ENCODE measurements at regions of chr19 and their contacts with region 1.

Region 1: GRCh38 chr19:48965040-48965805 is at the start of gene FTL:
- DNase-seq: peak; percentile 80
- H3K4me3 ChIP-seq: peak within 1 kb of the TSS; percentile 51 to 62 (median 52)
- H3K27ac ChIP-seq: peak within 1 kb of the TSS; percentile 7
- H3K4me1 ChIP-seq: peaks cover 27% of the 10 kb centered on the region
- H3K27me3 ChIP-seq: no peaks in the 10 kb centered on the region
- CTCF ChIP-seq: no peak
- total RNA-seq, gene FTL: 186 to 287 TPM

Region 2: DNA sequence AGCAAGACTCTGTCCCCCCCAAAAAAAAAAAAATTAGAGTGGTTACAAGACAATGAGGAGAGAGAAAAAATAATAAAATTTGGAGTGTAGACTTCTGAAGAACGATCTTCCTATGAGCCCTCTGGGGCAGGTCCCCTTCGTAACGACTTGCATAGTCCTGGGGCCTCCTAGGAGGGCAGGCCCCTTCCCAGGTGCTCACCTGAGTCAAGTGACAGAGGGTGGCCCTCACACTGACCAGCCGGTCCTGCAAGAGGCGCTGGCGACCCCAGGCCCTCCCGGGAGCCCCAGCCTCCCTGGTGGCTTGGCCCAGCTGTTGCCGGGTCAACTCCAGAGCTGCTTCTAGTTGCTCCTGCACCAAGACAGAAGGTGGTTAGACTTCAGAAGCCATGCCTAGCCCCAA is 111.7 kb before region 1 on chr19:
- CTCF ChIA-PET with region 1: no interaction called
- dilution Hi-C with region 1: loop called (anchors 5 kb)
- in situ Hi-C with region 1: no loop called
- intact Hi-C with region 1: no loop called
- DNase-seq: no peak
- H3K4me3 ChIP-seq: no peak overlapping the region
- H3K27ac ChIP-seq: no peak overlapping the region
- H3K4me1 ChIP-seq: no peaks in the 10 kb centered on the region
- H3K27me3 ChIP-seq: no peaks in the 10 kb centered on the region
- CTCF ChIP-seq: no peak

Region 3: DNA sequence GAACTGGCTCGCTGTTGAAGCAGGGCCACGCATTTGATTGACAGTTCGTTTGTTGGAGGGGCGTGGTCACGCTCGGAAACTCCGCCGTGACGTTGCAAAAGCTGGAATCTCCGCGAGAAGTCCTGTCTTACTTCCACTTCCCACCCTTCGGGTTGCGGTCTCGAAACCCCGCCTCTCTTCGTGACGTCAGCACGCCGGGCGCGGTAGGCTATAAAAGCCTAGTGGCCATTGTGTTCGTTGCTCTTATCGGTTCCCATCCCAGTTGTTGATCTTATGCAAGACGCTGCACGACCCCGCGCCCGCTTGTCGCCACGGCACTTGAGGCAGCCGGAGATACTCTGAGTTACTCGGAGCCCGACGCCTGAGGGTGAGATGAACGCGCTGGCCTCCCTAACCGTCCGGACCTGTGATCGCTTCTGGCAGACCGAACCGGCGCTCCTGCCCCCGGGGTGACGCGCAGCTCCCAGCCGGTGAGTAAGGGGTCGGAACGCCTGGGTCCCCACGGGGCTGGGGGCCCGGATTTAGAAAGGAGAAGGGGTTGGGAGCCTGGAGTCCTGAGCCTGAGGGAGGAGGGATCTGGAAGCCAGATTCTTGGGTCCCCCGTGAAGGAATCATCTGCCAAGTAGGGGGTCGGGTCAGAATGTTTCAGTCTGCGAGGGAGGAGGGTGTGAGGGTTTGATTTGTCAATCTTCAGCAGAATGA is 92.9 kb before region 1 on chr19 and contains the start of gene PPP1R15A:
- CTCF ChIA-PET with region 1: no interaction called
- dilution Hi-C with region 1: no loop called
- in situ Hi-C with region 1: no loop called
- intact Hi-C with region 1: loop called (anchors 1 kb)
- DNase-seq: peak; percentile 98
- H3K4me3 ChIP-seq: peak within 1 kb of the TSS; percentile 67 to 93 (median 89)
- H3K27ac ChIP-seq: peak within 1 kb of the TSS; percentile 99
- H3K4me1 ChIP-seq: peaks cover 33% of the 10 kb centered on the region
- H3K27me3 ChIP-seq: no peaks in the 10 kb centered on the region
- CTCF ChIP-seq: no peak
- total RNA-seq, gene PPP1R15A: 28.8 to 200 TPM

Region 4: GRCh38 chr19:48913114-48913889 is 51.9 kb before region 1 on chr19:
- CTCF ChIA-PET with region 1: no interaction called
- dilution Hi-C with region 1: no loop called
- in situ Hi-C with region 1: no loop called
- intact Hi-C with region 1: no loop called
- DNase-seq: no peak
- H3K4me3 ChIP-seq: no peak overlapping the region
- H3K27ac ChIP-seq: no peak overlapping the region
- H3K4me1 ChIP-seq: no peaks in the 10 kb centered on the region
- H3K27me3 ChIP-seq: no peaks in the 10 kb centered on the region
- CTCF ChIP-seq: no peak